Heart left ventricle (tissue), 16 donors: ENCODE measurements at regions of chr4 and their contacts with region 1.

Region 1: DNA sequence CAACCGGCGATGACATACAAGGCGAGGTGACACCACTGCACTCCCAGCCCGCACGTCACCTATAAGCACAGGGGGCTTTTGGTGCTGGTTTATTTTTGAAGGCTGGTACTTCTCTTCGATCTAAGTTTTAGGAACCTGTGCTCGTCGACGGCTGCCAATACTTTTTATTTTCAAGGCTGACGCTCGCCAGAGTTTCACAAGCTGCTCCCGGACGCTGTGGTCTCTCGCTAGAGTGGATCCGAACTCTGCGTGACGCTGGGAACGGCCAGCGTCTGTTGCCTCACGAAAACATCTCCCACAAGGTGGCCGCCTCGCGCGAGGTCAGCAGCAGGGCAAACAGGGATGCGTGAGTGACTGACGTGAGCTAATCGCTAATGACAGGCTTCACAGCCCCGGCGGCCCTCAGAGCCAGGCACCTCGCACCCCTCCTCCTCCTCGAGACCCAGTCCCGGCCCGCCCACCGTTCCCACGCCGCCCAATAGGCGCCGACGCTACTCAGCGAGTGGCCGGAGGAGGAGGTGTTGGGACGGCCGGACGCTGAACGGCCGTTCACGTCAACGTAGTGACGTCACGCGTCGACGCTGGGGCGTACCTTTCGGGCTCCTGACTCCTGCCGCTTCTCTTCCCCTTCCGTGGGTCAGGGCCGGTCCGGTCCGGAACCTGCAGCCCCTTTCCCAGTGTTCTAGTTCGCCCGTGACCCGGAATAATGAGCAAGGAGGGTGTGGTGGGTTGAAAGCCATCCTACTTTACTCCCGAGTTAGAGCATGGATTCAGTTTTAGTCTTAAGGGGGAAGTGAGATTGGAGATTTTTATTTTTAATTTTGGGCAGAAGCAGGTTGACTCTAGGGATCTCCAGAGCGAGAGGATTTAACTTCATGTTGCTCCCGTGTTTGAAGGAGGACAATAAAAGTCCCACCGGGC is at the start of gene CLCN3:
- DNase-seq: peak; percentile 98 to 99 (median 99)
- ATAC-seq: peak; percentile 99
- H3K4me3 ChIP-seq: peak within 1 kb of the TSS; percentile 55 to 84 (median 71)
- H3K27ac ChIP-seq: peak within 1 kb of the TSS; percentile 87 to 97 (median 94)
- H3K4me1 ChIP-seq: peaks cover 0 to 34% (median 22%) of the 10 kb centered on the region in 12 donors
- H3K27me3 ChIP-seq: no peaks in the 10 kb centered on the region
- CTCF ChIP-seq: peak in 6 of 12 donors; percentile 16 to 54 (median 38)
- POLR2A ChIP-seq: peak; percentile 8 to 92
- total RNA-seq, gene CLCN3: 46.4 to 86.2 (median 59.3) TPM

Region 2: DNA sequence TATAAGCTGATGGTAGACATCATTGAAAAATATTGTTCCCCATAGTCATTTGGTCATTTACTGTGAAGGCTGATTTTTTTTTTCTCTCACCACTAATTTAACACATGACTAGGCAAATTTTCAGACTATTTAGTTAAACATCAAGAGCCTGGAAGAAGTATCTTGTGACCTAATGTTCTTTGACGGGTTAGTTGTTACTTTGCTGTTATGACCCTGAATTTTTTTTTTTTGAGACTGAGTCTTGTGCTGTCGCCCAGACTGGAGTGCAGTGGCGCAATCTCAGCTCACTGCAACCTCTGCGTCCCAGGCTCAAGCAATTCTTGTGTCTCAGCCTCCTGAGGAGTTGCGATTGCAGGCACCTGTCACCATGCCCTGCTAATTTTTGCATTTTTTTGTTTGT is 70.6 kb after region 1 on chr4:
- intact Hi-C with region 1: no loop called
- DNase-seq: no peak
- ATAC-seq: no peak
- H3K4me3 ChIP-seq: no peak overlapping the region
- H3K27ac ChIP-seq: no peak overlapping the region
- H3K4me1 ChIP-seq: no peaks in the 10 kb centered on the region
- H3K27me3 ChIP-seq: no peaks in the 10 kb centered on the region
- CTCF ChIP-seq: no peak
- POLR2A ChIP-seq: no peak

Region 3: GRCh38 chr4:169707958-169708643 is 87.9 kb after region 1 on chr4:
- intact Hi-C with region 1: loop called in 7 of 10 experiments (anchors 5 to 10 kb)
- DNase-seq: no peak
- ATAC-seq: peak in 3 of 4 donors; percentile 36 to 65 (median 57)
- H3K4me3 ChIP-seq: no peak overlapping the region
- H3K27ac ChIP-seq: peak overlapping the region in 6 of 12 donors; percentile 6 to 28 (median 11)
- H3K4me1 ChIP-seq: peaks cover 0 to 14% (median 0%) of the 10 kb centered on the region in 12 donors
- H3K27me3 ChIP-seq: no peaks in the 10 kb centered on the region
- CTCF ChIP-seq: no peak
- POLR2A ChIP-seq: no peak

Region 4: DNA sequence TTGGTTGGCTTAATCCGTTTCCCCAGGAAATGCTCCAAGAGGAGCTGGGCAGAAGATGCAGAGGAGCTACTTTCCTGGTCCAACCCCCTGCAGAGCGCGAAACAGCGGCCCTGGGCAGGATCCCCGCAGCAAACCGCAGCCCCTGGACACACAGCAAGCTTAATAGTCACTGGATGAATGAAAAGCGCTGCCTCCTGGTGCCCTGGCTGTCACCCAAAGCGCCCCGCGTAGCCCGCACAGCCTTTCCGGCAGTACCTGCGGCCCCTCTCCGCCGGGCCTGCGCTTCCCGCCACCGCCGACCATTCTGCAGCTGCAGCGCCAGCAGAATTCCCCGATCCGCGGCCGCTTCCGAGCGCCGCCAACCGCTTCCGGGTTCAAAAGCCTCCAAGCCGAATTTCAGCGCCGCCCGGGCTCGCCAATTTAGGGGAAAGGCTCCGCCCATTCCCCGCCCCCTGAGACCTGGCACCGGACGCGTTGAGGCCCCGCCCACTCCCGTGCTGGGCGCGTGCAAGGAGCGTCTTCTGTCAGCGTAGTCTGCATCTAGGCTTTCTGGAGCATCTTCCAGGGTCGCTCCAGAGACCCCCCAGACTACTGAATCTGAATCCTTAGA is 137.5 kb after region 1 on chr4 and contains the start of gene HPF1:
- intact Hi-C with region 1: loop called in 2 of 10 experiments (anchors 2 to 10 kb)
- DNase-seq: peak; percentile 91 to 97 (median 93)
- ATAC-seq: peak; percentile 91 to 99 (median 98)
- H3K4me3 ChIP-seq: peak within 1 kb of the TSS; percentile 49 to 92 (median 89)
- H3K27ac ChIP-seq: peak within 1 kb of the TSS in 11 of 12 donors; percentile 32 to 84 (median 64)
- H3K4me1 ChIP-seq: peaks cover 4 to 26% (median 15%) of the 10 kb centered on the region in 12 donors
- H3K27me3 ChIP-seq: no peaks in the 10 kb centered on the region
- CTCF ChIP-seq: peak in 1 of 12 donors; percentile 27
- POLR2A ChIP-seq: peak in 1 of 2 donors; percentile 57
- total RNA-seq, gene HPF1: 15.7 to 38.3 (median 20.3) TPM

Region 5: DNA sequence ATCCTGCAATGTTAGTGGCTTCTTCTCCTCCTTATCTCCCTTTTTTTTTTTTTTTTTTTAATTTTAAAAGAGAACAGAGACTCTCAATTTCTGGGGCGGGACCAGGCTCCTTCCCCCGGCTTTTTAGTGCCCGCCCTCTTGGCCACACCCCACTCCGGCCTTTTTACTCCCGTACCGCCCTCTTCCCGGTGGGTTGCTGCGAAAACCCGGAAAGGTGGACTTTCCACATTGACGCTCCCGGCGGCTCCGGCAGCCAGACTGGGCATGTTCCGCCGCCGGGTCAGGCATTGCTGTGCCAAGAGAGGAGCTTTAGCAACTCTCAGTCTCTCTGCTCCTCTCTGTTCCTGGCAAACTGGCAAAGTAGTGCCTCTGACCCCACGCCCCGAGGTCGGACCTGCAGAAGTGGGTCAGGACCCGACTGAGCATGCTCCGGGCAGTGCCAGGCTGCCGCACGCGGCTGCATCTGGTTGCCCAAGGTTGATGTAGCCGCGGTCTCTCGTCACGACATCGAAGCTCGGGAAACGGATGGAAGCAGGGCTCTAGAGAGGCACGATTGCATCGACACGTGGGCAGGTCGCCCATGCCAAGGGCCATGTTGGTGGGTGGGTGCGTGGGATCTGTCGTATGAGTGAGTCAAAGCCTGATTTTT is 407.1 kb after region 1 on chr4:
- intact Hi-C with region 1: loop called in 3 of 10 experiments (anchors 10 kb)
- DNase-seq: peak; percentile 95 to 97 (median 95)
- ATAC-seq: peak; percentile 93 to 97 (median 94)
- H3K4me3 ChIP-seq: peak overlapping the region; percentile 75 to 99 (median 92)
- H3K27ac ChIP-seq: peak overlapping the region in 10 of 12 donors; percentile 85 to 93 (median 89)
- H3K4me1 ChIP-seq: peaks cover 0 to 15% (median 5%) of the 10 kb centered on the region in 12 donors
- H3K27me3 ChIP-seq: peaks cover 0 to 26% (median 0%) of the 10 kb centered on the region in 9 donors
- CTCF ChIP-seq: no peak
- POLR2A ChIP-seq: peak in 1 of 2 donors; percentile 15